ENCODE measurements at regions of chr10 and their contacts with region 1.

Region 1: DNA sequence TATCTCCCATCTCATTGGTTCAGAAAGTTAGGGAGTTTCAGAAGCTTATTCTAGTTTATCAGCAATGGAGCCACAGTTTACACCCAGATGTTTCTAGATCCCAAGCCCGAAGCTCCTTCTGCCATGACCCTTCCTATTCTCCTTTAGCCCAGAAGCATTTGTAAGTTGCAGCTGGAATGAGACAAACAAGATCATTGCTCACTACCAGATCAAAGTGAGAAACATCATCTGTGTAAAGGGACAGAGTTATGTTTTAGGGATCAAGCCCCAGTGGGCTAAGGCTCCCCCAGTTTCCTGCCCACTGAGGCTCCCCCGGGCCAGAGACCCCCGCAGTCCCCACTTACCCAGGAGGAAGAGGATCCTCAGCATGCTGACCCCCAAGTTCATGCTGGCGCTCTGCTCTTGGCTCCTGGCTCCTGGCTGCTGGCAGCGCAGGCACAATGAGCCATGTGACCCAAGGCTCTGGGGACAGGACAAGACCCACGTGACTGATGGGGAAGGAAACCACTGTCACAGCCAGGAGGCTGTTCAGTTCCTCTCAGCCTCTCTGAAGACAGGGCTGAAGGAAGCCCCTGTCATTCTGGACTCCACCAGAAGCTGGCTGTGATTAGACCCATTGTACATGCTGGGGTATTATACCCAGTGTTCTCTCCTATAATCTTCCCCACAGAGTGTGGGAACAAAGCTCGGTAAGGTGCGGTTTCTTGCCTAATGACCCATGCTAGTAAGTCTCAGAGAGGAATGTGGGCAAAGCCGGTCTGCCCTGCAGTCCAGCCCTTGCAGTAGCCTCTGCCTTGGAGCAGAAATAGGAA is at the start of gene TMEM273:
- DNase-seq: peak; percentile 73
- H3K4me3 Mint-ChIP-seq: peak within 1 kb of the TSS; percentile 76
- H3K27ac Mint-ChIP-seq: peak within 1 kb of the TSS; percentile 86
- H3K4me1 Mint-ChIP-seq: peaks cover 38% of the 10 kb centered on the region
- H3K27me3 Mint-ChIP-seq: peaks cover 17% of the 10 kb centered on the region
- total RNA-seq, gene TMEM273: 106 to 108 TPM

Region 2: GRCh38 chr10:49076741-49077521 is 111.2 kb before region 1 on chr10:
- CTCF ChIA-PET with region 1: no interaction called
- POLR2A ChIA-PET with region 1: no interaction called
- intact Hi-C with region 1: loop called (anchors 5 kb)
- DNase-seq: peak; percentile 46
- H3K4me3 Mint-ChIP-seq: no peak overlapping the region
- H3K27ac Mint-ChIP-seq: no peak overlapping the region
- H3K4me1 Mint-ChIP-seq: peaks cover 27% of the 10 kb centered on the region
- H3K27me3 Mint-ChIP-seq: peaks cover 8% of the 10 kb centered on the region

Region 3: DNA sequence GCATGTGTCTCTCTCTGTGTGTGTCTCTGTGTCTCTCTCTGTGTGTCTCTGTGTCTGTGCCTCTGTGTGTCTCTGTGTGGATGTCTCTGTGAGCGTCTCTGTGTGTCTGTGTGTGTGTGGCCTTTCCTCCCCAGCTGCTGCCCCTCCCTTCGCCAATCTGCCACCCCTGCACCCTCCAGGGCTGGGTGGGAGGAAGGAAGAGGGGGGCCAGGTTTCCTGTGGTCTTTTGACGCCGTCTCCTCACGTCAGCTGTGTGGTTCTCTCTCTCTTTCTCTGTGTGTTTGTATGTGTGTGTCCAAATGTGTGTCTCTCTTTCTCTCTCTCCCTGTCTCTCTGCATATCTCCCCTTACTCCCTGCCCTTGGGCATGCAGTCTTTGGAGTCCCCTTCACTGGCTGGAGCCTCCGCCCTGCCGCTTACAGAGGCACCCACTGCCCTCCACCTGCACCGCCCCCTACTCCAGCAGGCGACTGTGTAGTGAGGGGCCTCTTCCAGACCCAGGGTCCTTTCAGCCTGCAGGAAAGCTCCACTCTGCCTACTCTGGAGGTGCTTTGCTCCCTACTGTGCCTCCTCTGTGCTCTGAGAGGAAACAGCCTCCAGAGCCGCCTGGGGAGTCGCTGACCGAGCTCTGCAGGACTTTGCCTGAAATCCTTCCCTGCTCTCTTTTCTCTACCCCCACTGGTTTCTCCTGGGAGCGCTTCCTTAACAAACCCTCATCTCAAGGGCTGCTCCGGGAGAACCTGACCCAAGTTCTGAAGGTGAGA is 66.6 kb after region 1 on chr10:
- CTCF ChIA-PET with region 1: no interaction called
- POLR2A ChIA-PET with region 1: no interaction called
- intact Hi-C with region 1: loop called (anchors 5 kb)
- DNase-seq: peak; percentile 30
- H3K4me3 Mint-ChIP-seq: no peak overlapping the region
- H3K27ac Mint-ChIP-seq: no peak overlapping the region
- H3K4me1 Mint-ChIP-seq: peaks cover 5% of the 10 kb centered on the region
- H3K27me3 Mint-ChIP-seq: no peaks in the 10 kb centered on the region

Region 4: GRCh38 chr10:49512121-49512809 is 324.1 kb after region 1 on chr10:
- CTCF ChIA-PET with region 1: no interaction called
- POLR2A ChIA-PET with region 1: no interaction called
- intact Hi-C with region 1: loop called (anchors 10 kb)
- DNase-seq: no peak
- H3K4me3 Mint-ChIP-seq: no peak overlapping the region
- H3K27ac Mint-ChIP-seq: no peak overlapping the region
- H3K4me1 Mint-ChIP-seq: peaks cover 21% of the 10 kb centered on the region
- H3K27me3 Mint-ChIP-seq: peaks cover 2% of the 10 kb centered on the region